ENCODE measurements at regions of chr2 and their contacts with region 1.

Region 1: DNA sequence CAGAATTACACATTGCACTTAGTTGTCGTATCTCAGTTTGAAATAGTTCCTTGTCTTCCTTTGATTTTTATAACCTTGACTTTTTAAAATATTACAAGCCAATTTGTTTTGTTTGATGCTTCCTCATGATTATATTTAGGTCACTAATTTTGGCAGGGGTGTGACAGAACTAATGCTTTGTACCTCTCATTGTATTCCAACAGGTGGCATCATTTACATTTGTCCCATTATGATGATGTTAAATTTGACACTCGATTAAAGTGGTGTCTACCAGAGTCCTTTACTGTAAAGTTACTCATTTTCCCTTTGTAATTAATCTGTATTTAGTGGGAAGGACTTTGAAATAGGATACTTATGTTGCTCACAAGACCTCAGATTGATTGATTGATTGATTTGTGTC is 21.5 kb upstream of the MFSD2B start:
- DNase-seq: peak; percentile 54
- H3K4me3 Mint-ChIP-seq: no peak overlapping the region
- H3K27ac Mint-ChIP-seq: no peak overlapping the region
- H3K4me1 Mint-ChIP-seq: peaks cover 13% of the 10 kb centered on the region
- H3K27me3 Mint-ChIP-seq: no peaks in the 10 kb centered on the region
- CTCF ChIP-seq: peak; percentile 62

Region 2: DNA sequence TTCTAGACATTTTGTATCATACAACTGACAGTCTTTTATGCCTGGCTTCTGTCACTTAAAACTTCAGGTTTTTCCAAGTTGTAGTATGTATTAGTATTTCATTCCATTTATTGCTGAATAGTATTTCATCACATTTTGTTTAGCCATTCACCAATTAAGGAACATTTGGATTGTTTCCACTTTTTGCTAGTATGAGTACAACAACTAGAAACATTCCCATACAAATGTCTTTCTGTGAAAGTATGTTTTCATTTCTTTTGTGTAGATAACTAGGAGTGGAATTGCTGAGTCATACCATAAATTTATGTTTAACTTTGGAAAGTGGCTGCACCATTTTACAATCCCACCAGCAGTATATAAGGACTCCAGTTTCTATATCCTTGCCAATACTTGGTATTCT is 197.3 kb before region 1 on chr2:
- CTCF ChIA-PET with region 1: no interaction called
- POLR2A ChIA-PET with region 1: no interaction called
- intact Hi-C with region 1: no loop called
- DNase-seq: peak; percentile 63
- H3K4me3 Mint-ChIP-seq: no peak overlapping the region
- H3K27ac Mint-ChIP-seq: peak overlapping the region; percentile 86
- H3K4me1 Mint-ChIP-seq: peaks cover 20% of the 10 kb centered on the region
- H3K27me3 Mint-ChIP-seq: no peaks in the 10 kb centered on the region
- CTCF ChIP-seq: no peak

Region 3: GRCh38 chr2:24164125-24164973 is 176.0 kb after region 1 on chr2:
- CTCF ChIA-PET with region 1: no interaction called
- POLR2A ChIA-PET with region 1: no interaction called
- intact Hi-C with region 1: loop called (anchors 1 kb)
- DNase-seq: peak; percentile 38
- H3K4me3 Mint-ChIP-seq: no peak overlapping the region
- H3K27ac Mint-ChIP-seq: no peak overlapping the region
- H3K4me1 Mint-ChIP-seq: no peaks in the 10 kb centered on the region
- H3K27me3 Mint-ChIP-seq: no peaks in the 10 kb centered on the region
- CTCF ChIP-seq: peak; percentile 60

Measured in MCF 10A (cell line).